Transverse colon (tissue), 4 donors: ENCODE measurements at regions of chr17 and their contacts with region 1.

Region 1: GRCh38 chr17:7045909-7046724 is 2.2 kb upstream of the SLC16A11 start:
- DNase-seq: peak; percentile 95
- H3K4me3 ChIP-seq: peak overlapping the region in 3 of 4 donors; percentile 17 to 41 (median 21)
- H3K27ac ChIP-seq: peak overlapping the region; percentile 75 to 94 (median 82)
- H3K4me1 ChIP-seq: peaks cover 25 to 48% (median 37%) of the 10 kb centered on the region in 4 donors
- H3K27me3 ChIP-seq: peaks cover 17% of the 10 kb centered on the region
- CTCF ChIP-seq: peak; percentile 73 to 95 (median 77)
- EP300 ChIP-seq: no peak
- POLR2A ChIP-seq: peak; percentile 14

Region 2: GRCh38 chr17:7004398-7005253 is 41.5 kb before region 1 on chr17:
- in situ Hi-C with region 1: no loop called
- intact Hi-C with region 1: no loop called
- DNase-seq: no peak
- H3K4me3 ChIP-seq: no peak overlapping the region
- H3K27ac ChIP-seq: no peak overlapping the region
- H3K4me1 ChIP-seq: peaks cover 0 to 3% (median under 1%) of the 10 kb centered on the region in 4 donors
- H3K27me3 ChIP-seq: no peaks in the 10 kb centered on the region
- CTCF ChIP-seq: peak; percentile 65 to 79 (median 73)
- EP300 ChIP-seq: no peak
- POLR2A ChIP-seq: no peak

Region 3: GRCh38 chr17:7136266-7136877 is 90.3 kb after region 1 on chr17:
- in situ Hi-C with region 1: loop called (anchors 5 kb)
- intact Hi-C with region 1: no loop called
- DNase-seq: peak; percentile 78
- H3K4me3 ChIP-seq: peak overlapping the region in 1 of 4 donors; percentile 18
- H3K27ac ChIP-seq: no peak overlapping the region
- H3K4me1 ChIP-seq: peaks cover 0 to 20% (median 8%) of the 10 kb centered on the region in 4 donors
- H3K27me3 ChIP-seq: peaks cover 19% of the 10 kb centered on the region
- CTCF ChIP-seq: peak; percentile 89 to 93 (median 91)
- EP300 ChIP-seq: no peak
- POLR2A ChIP-seq: no peak

Region 4: GRCh38 chr17:7214300-7215135 is 168.4 kb after region 1 on chr17:
- in situ Hi-C with region 1: loop called in 1 of 4 experiments (anchors 10 kb)
- intact Hi-C with region 1: no loop called
- DNase-seq: peak; percentile 99
- H3K4me3 ChIP-seq: peak overlapping the region; percentile 13 to 59 (median 29)
- H3K27ac ChIP-seq: peak overlapping the region; percentile 79 to 100 (median 92)
- H3K4me1 ChIP-seq: peaks cover 26 to 56% (median 49%) of the 10 kb centered on the region in 4 donors
- H3K27me3 ChIP-seq: no peaks in the 10 kb centered on the region
- CTCF ChIP-seq: peak; percentile 27 to 61 (median 46)
- EP300 ChIP-seq: no peak
- POLR2A ChIP-seq: no peak

Region 5: DNA sequence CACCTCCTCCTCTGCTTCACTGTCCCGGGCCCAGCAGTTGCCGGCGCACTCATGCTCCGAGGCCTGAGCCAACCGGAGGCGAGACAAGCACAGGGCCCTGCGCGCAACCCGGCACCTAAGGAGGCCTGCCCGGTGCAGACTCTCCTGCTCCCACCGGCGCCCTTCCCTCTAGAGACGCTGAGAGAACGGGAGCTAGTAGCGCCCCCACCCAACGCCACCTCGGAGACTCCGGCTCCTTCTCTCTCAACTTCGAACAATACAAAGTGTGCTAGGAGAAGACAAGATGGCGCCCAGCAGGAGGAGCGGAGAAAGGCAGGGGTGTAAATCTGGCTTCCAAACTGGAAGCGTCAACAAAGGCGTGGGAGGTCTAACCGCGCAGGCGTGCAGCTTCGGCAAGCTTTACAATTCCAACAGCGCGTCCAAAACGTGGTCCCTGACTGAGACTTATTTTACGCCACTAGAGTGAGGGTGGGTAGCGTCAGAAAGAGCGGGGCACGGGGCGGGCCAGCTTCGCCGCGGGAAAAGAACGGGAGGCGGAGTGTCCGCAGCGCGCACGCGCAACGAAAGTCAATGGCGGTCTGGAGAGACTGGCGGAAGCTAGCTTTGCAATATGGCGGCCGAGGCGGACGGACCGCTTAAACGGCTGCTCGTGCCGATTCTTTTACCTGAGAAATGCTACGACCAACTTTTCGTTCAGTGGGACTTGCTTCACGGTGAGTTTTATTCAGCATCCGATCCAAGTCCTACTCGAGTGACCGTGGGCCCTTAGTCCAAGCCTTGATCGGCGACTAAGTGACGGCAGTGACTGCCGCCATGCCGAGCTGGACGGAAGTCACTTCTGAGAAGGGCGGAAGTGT is 537.4 kb after region 1 on chr17 and contains the start of gene MPDU1:
- in situ Hi-C with region 1: no loop called
- intact Hi-C with region 1: loop called (anchors 10 kb)
- DNase-seq: peak; percentile 96
- H3K4me3 ChIP-seq: peak within 1 kb of the TSS; percentile 18 to 67 (median 48)
- H3K27ac ChIP-seq: peak within 1 kb of the TSS; percentile 89 to 91 (median 90)
- H3K4me1 ChIP-seq: peaks cover 35 to 69% (median 52%) of the 10 kb centered on the region in 4 donors
- H3K27me3 ChIP-seq: no peaks in the 10 kb centered on the region
- CTCF ChIP-seq: peak in 1 of 5 experiments; percentile 29
- EP300 ChIP-seq: no peak
- POLR2A ChIP-seq: peak; percentile 83
- total RNA-seq, gene MPDU1: 97.9 to 312 (median 157) TPM